Activated CD8-positive, alpha-beta T cell treated with anti-CD3 and anti-CD28 coated beads for 36 hours (primary cell): ENCODE measurements at regions of chr5 and their contacts with region 1.

Region 1: DNA sequence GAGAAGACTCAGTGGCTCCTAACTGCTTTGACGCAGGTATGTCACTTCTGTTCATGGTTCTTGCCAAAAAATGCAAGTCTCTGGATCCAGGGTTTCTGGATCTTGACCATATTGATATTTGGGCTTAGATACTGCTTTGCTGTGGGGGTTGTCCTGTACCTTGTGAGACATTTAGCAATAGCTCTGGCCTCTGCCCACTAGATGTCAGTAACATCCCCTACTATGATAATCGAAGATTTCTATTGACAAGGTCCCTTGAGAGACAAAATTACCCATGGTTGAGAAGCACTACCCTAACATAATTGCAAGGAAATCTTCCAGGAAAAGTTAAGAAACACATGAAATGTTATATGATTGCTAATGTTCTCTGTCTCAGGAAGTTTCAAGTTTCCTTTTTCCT is 285.4 kb downstream of the TMEM232 start:
- DNase-seq: peak; percentile 18
- ATAC-seq: no peak
- H3K4me3 Mint-ChIP-seq: no peak overlapping the region
- H3K27ac Mint-ChIP-seq: no peak overlapping the region
- H3K4me1 Mint-ChIP-seq: no peaks in the 10 kb centered on the region
- H3K27me3 Mint-ChIP-seq: no peaks in the 10 kb centered on the region
- CTCF ChIP-seq: no peak

Region 2: GRCh38 chr5:110478895-110479294 is 37.9 kb after region 1 on chr5:
- CTCF ChIA-PET with region 1: no interaction called
- POLR2A ChIA-PET with region 1: no interaction called
- intact Hi-C with region 1: no loop called
- DNase-seq: no peak
- ATAC-seq: no peak
- H3K4me3 Mint-ChIP-seq: no peak overlapping the region
- H3K27ac Mint-ChIP-seq: no peak overlapping the region
- H3K4me1 Mint-ChIP-seq: no peaks in the 10 kb centered on the region
- H3K27me3 Mint-ChIP-seq: peaks cover 1% of the 10 kb centered on the region
- CTCF ChIP-seq: no peak

Region 3: GRCh38 chr5:110625376-110625999 is 184.5 kb after region 1 on chr5:
- CTCF ChIA-PET with region 1: interaction called, 4 read pairs
- POLR2A ChIA-PET with region 1: no interaction called
- intact Hi-C with region 1: loop called (anchors 5 kb)
- DNase-seq: no peak
- ATAC-seq: no peak
- H3K4me3 Mint-ChIP-seq: no peak overlapping the region
- H3K27ac Mint-ChIP-seq: no peak overlapping the region
- H3K4me1 Mint-ChIP-seq: no peaks in the 10 kb centered on the region
- H3K27me3 Mint-ChIP-seq: peaks cover 2% of the 10 kb centered on the region
- CTCF ChIP-seq: peak; percentile 47